ENCODE measurements at regions of chr9 and their contacts with region 1.

Region 1: GRCh38 chr9:107548048-107548800 is 58.7 kb upstream of the KLF4 start:
- DNase-seq: peak; percentile 89
- ATAC-seq: peak; percentile 87
- H3K4me3 ChIP-seq: peak overlapping the region; percentile 45; the same call in 1 of the 2 replicates
- H3K27ac ChIP-seq: peak overlapping the region; percentile 92
- H3K4me1 ChIP-seq: peaks cover 19% of the 10 kb centered on the region
- H3K27me3 ChIP-seq: no peaks in the 10 kb centered on the region
- CTCF ChIP-seq: no peak

Region 2: GRCh38 chr9:107447810-107448209 is 100.4 kb before region 1 on chr9:
- CTCF ChIA-PET with region 1: no interaction called
- POLR2A ChIA-PET with region 1: no interaction called
- intact Hi-C with region 1: no loop called
- DNase-seq: peak; percentile 12
- ATAC-seq: no peak
- H3K4me3 ChIP-seq: no peak overlapping the region
- H3K27ac ChIP-seq: no peak overlapping the region
- H3K4me1 ChIP-seq: no peaks in the 10 kb centered on the region
- H3K27me3 ChIP-seq: no peaks in the 10 kb centered on the region
- CTCF ChIP-seq: no peak

Region 3: DNA sequence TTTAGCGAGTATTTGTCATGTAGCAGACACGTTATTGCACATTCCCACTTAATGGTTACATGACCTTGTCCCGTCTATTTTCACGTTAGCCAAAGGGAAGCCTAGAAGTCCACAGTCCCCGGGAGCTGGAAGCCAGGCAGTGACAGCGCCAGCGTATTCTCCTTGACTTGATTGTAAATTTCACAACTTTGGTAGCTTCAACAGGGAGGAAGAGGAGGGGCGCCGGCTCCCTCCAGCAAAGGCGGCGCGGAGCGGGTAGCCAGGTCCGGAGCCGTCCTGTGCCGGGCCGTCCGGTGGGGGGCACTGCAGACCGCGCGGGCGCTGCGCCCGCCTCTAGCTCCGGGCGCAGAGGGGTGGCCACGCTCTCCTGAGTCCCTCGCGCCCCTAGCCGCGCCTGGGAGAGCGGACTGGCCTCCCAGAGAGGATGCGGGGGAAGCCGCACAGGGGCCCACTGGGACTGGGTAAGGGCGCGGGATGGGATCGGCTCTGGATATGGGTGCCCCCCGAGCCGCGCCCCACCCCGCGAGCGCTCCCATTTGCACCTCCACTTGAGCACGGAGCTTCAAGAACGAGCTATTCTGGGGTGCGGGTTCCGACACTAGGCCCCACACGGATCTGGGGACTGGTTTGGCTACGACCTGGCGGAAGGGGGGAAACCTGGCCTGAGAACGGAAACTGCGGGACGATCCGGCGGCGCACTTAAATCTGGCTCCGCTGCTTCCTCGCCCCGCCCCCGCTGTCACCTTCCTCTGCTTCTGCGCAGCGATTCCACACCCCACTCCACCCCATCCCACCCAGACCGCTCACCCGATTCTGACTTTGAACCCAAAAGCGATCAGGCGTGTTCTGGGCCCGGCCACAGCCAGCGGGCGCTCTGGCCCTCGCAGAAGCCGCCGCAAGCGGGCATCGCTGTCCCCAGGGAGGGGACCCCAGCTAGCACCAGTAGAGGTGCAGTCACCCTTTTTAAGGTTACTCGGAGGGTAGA is 82.5 kb before region 1 on chr9:
- CTCF ChIA-PET with region 1: no interaction called
- POLR2A ChIA-PET with region 1: no interaction called
- intact Hi-C with region 1: no loop called
- DNase-seq: peak; percentile 55
- ATAC-seq: peak; percentile 94
- H3K4me3 ChIP-seq: peak overlapping the region; percentile 85
- H3K27ac ChIP-seq: no peak overlapping the region
- H3K4me1 ChIP-seq: 0 out of 2 replicates have a peak, but pooled peaks cover 4% of the 10 kb centered on the region
- H3K27me3 ChIP-seq: no peaks in the 10 kb centered on the region
- CTCF ChIP-seq: peak; percentile 73

Region 4: DNA sequence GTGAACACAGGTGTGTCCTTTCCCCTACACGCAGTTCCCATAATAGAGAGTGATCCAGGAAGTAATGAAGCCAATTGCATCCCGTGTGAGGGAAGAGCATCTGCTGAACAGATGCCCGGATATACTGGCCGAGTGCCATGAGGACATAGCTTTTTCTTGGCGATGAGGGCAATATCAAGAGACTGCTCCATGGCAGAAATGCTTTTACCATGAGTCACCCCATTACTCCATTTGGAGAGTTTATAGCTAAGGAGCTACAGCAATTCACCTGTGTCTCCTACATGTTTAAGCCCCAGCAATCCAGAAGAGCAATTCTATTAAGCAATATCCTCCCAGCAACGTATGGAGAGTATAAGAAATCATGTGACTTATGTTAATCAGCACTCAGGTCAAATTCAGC is 163.3 kb after region 1 on chr9:
- CTCF ChIA-PET with region 1: no interaction called
- POLR2A ChIA-PET with region 1: no interaction called
- intact Hi-C with region 1: loop called (anchors 1 kb)
- DNase-seq: peak; percentile 97
- ATAC-seq: peak; percentile 75
- H3K4me3 ChIP-seq: no peak overlapping the region
- H3K27ac ChIP-seq: peak overlapping the region; percentile 75
- H3K4me1 ChIP-seq: peaks cover 40% of the 10 kb centered on the region
- H3K27me3 ChIP-seq: no peaks in the 10 kb centered on the region
- CTCF ChIP-seq: no peak